ENCODE measurements at regions of chr22 and their contacts with region 1.

Region 1: DNA sequence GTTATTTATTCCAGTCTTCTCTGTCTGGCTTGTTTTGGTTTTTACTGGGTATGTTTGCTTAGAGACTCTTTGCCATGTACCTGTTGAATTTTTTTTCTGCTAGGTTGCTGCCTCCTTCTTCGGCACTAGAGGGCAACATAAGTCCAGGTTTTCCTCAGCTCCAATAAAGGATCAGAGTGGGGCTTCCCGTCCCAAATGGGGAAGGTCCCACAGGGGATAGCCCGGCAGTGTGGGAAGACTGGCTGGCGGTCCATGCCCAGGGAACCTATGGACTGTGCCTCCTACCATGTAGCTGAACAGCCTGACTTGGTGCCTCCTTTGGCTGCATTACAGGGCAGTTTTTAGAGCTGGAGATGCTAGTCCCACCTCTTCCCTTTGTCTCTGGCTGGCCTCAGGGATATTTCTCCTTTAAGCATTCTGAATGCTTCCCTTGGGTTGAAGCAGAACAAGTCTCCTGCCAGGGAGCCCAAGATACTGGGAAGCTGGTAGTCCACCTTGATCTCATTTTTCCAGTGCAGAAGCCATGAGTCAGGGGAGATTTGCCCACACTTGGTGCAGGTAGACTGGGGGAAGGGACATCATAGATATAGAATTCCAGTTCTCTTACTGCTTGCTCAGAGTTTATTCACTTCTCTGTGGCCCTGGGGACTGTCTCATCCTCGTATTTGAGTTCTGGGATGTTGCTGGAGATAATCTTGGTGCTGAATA is 60.2 kb downstream of the BRD1 start:
- DNase-seq: no peak
- ATAC-seq: no peak

Region 2: DNA sequence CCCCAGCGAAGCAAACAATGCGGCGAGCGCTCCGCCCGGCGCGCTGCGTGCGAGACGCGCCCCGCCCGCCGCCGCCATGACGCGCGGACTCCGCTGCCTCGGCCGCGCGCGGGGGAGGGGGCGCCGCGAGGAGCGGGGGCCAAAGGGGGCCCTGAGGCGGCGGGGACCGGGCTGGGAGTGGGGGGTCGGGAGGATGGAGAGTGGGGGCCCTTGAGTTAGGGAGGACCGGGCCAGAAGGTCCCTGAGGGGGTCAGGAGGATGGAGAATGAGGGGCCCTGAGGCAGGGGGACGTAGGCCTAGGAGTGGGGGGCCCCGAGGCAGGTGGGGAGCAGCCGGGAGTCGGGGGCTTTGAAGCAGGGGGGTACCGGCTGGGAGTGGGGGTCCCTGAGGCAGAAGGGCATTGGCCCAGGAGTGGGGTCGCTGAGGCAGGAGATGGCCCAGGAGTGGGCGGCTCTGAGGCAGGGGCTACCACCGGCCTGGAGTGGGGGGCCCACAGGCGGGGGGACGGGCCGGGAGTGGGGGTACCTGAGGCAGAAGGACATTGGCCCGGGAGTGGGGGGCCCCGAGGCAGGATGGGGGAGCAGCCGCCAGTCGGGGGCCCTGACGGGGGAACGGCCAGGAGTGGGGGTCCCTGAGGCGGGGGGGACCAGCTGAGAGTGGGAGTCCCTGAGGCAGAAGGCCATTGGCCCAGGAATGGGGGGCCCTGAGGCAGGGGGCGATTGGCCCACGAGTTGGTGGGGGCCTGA is 60.5 kb after region 1 on chr22 and contains the start of gene BRD1:
- intact Hi-C with region 1: no loop called
- DNase-seq: peak; percentile 79
- ATAC-seq: peak; percentile 70 to 77
- total RNA-seq, gene BRD1: 17.8 to 19.6 TPM

Region 3: GRCh38 chr22:50030297-50031188 is 263.0 kb after region 1 on chr22:
- intact Hi-C with region 1: loop called in 1 of 2 experiments (anchors 5 kb)
- DNase-seq: peak; percentile 82
- ATAC-seq: peak; percentile 92 to 95